ENCODE measurements at regions of chr12 and their contacts with region 1.

Region 1: GRCh38 chr12:52278541-52279421 is 4.3 kb downstream of the KRT86 start:
- DNase-seq: peak; percentile 38
- H3K4me3 ChIP-seq: peak overlapping the region; percentile 17
- H3K27ac ChIP-seq: peak overlapping the region; percentile 21
- H3K27me3 ChIP-seq: no peaks in the 10 kb centered on the region
- CTCF ChIP-seq: peak; percentile 97

Region 2: GRCh38 chr12:52156736-52157565 is 121.8 kb before region 1 on chr12:
- CTCF ChIA-PET with region 1: interaction called, 29 read pairs
- POLR2A ChIA-PET with region 1: no interaction called
- DNase-seq: no peak
- H3K4me3 ChIP-seq: no peak overlapping the region
- H3K27ac ChIP-seq: no peak overlapping the region
- H3K27me3 ChIP-seq: no peaks in the 10 kb centered on the region
- CTCF ChIP-seq: peak; percentile 96

Region 3: DNA sequence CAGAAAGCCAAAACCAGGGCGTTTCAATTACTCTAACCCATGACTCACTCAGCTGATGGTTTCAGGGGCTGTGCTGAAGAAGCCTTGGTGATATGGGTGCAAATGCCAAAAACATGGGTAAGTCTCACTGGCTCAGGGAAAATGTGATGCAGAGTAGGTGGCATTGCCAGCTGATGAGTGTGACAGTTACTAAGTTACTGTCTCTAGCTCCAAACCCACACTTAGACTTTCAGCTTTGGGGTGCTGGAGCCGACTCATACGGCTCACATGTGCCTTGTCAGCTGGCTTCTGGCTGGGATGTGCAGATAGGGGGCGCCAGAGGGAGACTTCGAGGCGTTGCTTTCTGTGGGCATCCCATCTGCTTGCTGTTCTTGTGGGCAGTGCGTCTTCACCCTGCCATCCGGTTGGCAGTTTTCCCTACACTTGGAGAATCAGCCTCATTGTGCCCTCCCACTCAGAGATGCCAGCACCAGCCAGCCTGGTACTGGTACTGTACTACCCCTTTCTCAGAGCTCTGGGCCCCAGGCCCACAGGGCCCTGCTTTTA is 56.8 kb before region 1 on chr12:
- CTCF ChIA-PET with region 1: interaction called, 30 read pairs
- POLR2A ChIA-PET with region 1: no interaction called
- DNase-seq: no peak
- H3K4me3 ChIP-seq: no peak overlapping the region
- H3K27ac ChIP-seq: no peak overlapping the region
- H3K27me3 ChIP-seq: no peaks in the 10 kb centered on the region
- CTCF ChIP-seq: peak; percentile 48

Region 4: DNA sequence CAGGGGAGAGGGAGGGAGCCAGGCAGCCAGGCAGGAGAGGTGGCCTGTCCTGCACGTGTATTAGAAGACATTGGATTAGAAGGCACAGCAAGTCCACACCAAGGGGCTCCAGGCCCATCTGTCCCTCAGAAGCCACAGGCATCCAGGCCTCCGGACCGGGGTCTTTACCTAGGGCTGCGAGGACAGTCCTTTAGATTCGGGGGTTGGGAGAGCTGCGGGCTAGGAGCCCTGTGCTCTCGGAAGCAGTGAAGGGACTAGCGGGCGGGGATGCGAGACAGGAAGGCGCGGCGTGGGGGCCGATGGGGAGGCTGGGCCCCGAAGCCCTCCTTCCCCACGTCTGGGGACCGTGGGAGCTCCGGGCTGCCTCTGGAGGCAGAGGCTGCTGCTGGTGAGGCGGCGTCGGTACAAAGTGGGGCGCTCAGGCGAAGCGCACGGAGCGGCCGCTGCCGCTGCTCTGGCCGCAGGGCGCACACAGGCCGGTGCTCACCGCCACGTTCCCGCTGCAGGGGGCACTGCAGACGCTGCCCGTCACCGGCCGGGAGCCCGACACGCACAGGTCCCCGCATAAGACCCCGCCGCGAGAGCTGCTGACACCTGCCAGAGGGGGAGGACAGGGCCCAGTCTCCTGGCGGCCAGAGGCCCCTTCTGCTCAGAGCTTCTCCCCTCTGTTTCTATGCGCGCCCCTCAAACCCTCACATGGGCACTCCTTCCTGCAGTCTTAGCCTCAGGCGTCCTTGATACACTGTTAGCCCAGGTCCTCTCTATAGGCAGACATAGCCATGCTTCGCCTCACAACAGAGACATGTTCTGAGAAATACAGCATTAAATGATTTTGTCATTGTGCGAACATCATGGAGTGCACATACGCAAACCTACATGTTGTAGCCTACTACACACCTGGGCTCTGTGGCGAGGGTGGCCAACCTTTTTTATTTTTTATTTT is 28.5 kb before region 1 on chr12:
- CTCF ChIA-PET with region 1: interaction called, 42 read pairs
- POLR2A ChIA-PET with region 1: no interaction called
- DNase-seq: no peak
- H3K4me3 ChIP-seq: no peak overlapping the region
- H3K27ac ChIP-seq: no peak overlapping the region
- H3K27me3 ChIP-seq: peaks cover 23% of the 10 kb centered on the region
- CTCF ChIP-seq: no peak

Region 5: DNA sequence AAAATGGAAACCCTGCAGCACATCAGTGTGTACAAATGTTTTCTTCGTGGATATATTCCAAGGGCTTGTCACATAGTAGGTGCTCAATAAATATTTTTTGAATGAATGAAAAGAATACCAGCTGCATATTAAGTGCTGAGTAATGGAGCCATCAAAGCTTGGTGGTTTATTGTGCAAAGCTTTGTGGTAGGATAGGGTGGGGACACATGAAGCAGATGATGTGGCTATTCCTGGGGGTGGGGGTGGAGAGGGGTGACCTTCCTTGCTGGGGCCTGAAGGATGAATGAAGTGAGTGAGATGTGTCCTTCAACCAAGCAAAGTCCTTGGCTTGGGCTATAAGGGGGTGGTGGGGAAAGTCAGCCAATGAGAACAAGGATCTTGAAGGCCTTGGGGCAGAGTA is 16.9 kb after region 1 on chr12:
- CTCF ChIA-PET with region 1: interaction called, 33 read pairs
- POLR2A ChIA-PET with region 1: no interaction called
- DNase-seq: no peak
- H3K4me3 ChIP-seq: no peak overlapping the region
- H3K27ac ChIP-seq: no peak overlapping the region
- H3K27me3 ChIP-seq: peaks cover 34% of the 10 kb centered on the region
- CTCF ChIP-seq: no peak

Region 6: GRCh38 chr12:53169644-53170043 is 890.9 kb after region 1 on chr12:
- CTCF ChIA-PET with region 1: no interaction called
- POLR2A ChIA-PET with region 1: no interaction called
- DNase-seq: no peak
- H3K4me3 ChIP-seq: no peak overlapping the region
- H3K27ac ChIP-seq: no peak overlapping the region
- H3K27me3 ChIP-seq: no peaks in the 10 kb centered on the region
- CTCF ChIP-seq: no peak

Measured in AG04450 (cell line).